ENCODE measurements at regions of chr12 and their contacts with region 1.

Region 1: GRCh38 chr12:56127888-56128669 is at the start of gene ESYT1:
- DNase-seq: peak; percentile 83
- ATAC-seq: peak; percentile 86
- H3K4me3 Mint-ChIP-seq: peak within 1 kb of the TSS; percentile 97
- H3K27ac Mint-ChIP-seq: peak within 1 kb of the TSS; percentile 98
- H3K4me1 Mint-ChIP-seq: peaks cover 69% of the 10 kb centered on the region
- H3K27me3 Mint-ChIP-seq: no peaks in the 10 kb centered on the region
- CTCF ChIP-seq: no peak
- total RNA-seq, gene ESYT1: 120 and 137 TPM in 2 replicates

Region 2: GRCh38 chr12:56146492-56147460 is 18.7 kb after region 1 on chr12:
- CTCF ChIA-PET with region 1: interaction called, 7 read pairs
- POLR2A ChIA-PET with region 1: interaction called, 80 read pairs
- intact Hi-C with region 1: no loop called
- DNase-seq: no peak
- ATAC-seq: no peak
- H3K4me3 Mint-ChIP-seq: no peak overlapping the region
- H3K27ac Mint-ChIP-seq: no peak overlapping the region
- H3K4me1 Mint-ChIP-seq: peaks cover 30% of the 10 kb centered on the region
- H3K27me3 Mint-ChIP-seq: no peaks in the 10 kb centered on the region
- CTCF ChIP-seq: no peak

Region 3: DNA sequence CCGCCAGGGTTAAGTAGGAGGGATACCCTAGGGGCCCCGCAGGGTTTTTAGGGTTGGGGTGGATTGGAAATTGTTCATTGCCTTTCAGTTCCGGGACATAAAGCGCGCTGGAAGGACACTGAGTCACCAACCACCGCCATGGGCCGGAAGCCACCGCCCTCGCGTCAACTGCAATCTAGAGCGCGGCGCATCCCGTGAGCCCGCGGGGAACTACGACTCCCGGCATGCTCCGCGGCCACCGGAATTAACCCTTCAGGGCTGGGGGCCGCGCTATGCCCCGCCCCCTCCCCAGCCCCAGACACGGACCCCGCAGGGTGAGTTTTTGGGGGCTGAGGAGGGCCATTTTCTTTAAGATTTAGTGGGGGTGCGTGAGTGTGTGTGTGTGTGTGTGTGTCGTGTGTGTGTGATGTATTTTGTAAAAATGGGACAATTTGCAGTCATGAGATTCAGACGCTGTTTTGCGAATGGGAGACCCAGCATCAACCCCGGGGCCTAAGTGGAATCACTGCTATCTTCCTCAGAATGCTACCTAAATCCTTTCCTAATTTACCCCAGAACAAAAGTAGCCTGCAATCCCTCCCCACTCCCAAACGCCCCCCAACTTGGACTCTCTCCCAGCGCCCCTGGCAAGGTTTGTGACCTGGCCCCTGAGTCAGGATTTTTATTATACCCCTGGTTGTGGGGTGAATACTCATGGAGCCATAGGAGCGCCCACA is 24.4 kb after region 1 on chr12 and contains the start of gene MYL6B:
- CTCF ChIA-PET with region 1: interaction called, 7 read pairs
- POLR2A ChIA-PET with region 1: interaction called, 80 read pairs
- intact Hi-C with region 1: loop called (anchors 1 kb)
- DNase-seq: peak; percentile 87
- ATAC-seq: peak; percentile 89
- H3K4me3 Mint-ChIP-seq: peak within 1 kb of the TSS; percentile 93
- H3K27ac Mint-ChIP-seq: peak within 1 kb of the TSS; percentile 99
- H3K4me1 Mint-ChIP-seq: peaks cover 40% of the 10 kb centered on the region
- H3K27me3 Mint-ChIP-seq: no peaks in the 10 kb centered on the region
- CTCF ChIP-seq: no peak
- total RNA-seq, gene MYL6B: 25.2 and 36.2 TPM in 2 replicates

Region 4: DNA sequence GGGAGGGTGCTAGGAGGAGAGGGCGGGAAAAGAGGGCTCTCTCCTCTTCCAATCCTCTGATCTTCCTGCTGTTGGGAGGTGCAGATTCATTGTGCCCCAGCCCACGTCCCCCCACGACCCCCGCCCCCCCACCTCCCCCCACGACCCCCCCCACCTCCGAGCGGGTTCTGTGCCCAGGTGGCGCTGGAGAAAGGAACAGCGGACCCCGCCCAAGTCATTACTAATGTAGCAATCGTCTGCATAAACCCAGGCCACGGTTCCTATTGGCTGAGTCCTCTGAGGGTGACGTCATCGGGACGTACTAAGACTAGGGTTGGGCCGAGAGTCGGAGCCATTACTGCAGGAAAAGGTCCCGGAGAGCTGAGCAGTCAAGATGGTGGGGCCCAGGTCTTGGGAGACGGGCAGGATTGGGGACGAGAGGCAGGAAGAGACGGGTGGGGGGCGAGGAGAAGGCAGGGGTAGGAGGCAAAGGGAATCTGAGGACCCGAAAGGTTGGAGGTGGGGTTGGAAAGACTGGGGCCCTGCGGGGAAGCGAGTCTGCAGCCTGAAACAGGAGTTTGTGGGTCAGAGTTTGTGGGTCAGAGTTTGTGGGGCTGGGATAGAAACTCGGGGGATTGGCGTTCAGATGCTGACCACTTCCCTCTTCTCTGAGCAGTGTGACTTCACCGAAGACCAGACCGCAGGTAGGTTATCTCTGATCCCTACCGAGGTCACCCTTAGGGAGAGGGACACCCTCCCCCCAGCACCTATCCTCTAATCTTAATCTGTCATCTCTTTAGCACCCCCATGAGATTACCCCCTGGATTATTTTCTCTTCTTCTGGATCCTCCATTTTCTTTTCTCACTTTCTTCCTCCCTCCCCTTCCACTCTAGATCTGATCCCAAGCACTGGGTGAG is 30.2 kb after region 1 on chr12 and contains the start of gene MYL6:
- CTCF ChIA-PET with region 1: interaction called, 6 read pairs
- POLR2A ChIA-PET with region 1: interaction called, 67 read pairs
- intact Hi-C with region 1: loop called (anchors 1 kb)
- DNase-seq: peak; percentile 70
- ATAC-seq: peak; percentile 86
- H3K4me3 Mint-ChIP-seq: peak within 1 kb of the TSS; percentile 94
- H3K27ac Mint-ChIP-seq: peak within 1 kb of the TSS; percentile 95
- H3K4me1 Mint-ChIP-seq: peaks cover 48% of the 10 kb centered on the region
- H3K27me3 Mint-ChIP-seq: no peaks in the 10 kb centered on the region
- CTCF ChIP-seq: no peak
- total RNA-seq, gene MYL6: 921 and 1,059 TPM in 2 replicates

Region 5: GRCh38 chr12:56346703-56347102 is 218.6 kb after region 1 on chr12:
- CTCF ChIA-PET with region 1: no interaction called
- POLR2A ChIA-PET with region 1: no interaction called
- intact Hi-C with region 1: no loop called
- DNase-seq: no peak
- ATAC-seq: no peak
- H3K4me3 Mint-ChIP-seq: no peak overlapping the region
- H3K27ac Mint-ChIP-seq: no peak overlapping the region
- H3K4me1 Mint-ChIP-seq: no peaks in the 10 kb centered on the region
- H3K27me3 Mint-ChIP-seq: no peaks in the 10 kb centered on the region
- CTCF ChIP-seq: no peak

Region 6: GRCh38 chr12:56593909-56594621 is 466.0 kb after region 1 on chr12:
- CTCF ChIA-PET with region 1: no interaction called
- POLR2A ChIA-PET with region 1: no interaction called
- intact Hi-C with region 1: loop called (anchors 10 kb)
- DNase-seq: peak; percentile 33
- ATAC-seq: peak; percentile 83
- H3K4me3 Mint-ChIP-seq: no peak overlapping the region
- H3K27ac Mint-ChIP-seq: no peak overlapping the region
- H3K4me1 Mint-ChIP-seq: peaks cover 2% of the 10 kb centered on the region
- H3K27me3 Mint-ChIP-seq: no peaks in the 10 kb centered on the region
- CTCF ChIP-seq: no peak

Region 7: DNA sequence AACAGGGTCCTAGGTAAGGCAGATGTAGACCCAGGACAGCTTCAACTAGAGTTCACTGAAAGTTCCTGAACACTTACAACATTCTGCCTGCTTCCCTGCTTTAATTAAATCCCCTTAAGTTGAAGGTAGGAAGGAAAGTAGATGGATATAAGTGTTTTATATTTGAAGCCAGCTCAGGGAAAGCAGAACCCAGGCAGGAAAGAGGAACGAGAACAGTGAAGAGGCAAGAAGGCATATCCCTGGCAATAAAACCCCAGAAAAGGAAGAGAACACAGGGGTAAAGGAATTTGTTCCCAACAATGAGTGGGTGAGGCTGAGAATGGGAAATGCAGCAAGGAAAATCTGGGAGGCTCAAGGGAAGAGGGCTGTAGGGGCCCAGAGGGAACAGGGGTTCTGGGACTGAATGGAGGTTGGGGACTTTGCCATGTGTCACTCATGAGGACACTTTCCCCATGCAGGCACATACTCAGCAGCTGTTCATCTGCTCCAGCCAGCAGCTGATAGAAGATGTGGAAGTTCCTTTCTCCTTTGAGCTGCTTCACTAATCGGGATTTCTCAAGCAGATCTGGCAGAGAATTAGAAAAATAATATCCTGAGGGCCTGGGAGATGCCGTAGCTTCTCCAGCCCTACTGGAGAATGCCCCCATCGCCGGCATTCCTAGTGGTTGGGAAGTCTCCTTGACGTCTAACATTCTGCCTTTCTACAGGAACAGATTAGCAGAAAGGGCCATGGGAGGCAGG is 918.2 kb after region 1 on chr12:
- CTCF ChIA-PET with region 1: no interaction called
- POLR2A ChIA-PET with region 1: no interaction called
- intact Hi-C with region 1: no loop called
- DNase-seq: no peak
- ATAC-seq: no peak
- H3K4me3 Mint-ChIP-seq: no peak overlapping the region
- H3K27ac Mint-ChIP-seq: no peak overlapping the region
- H3K4me1 Mint-ChIP-seq: peaks cover 22% of the 10 kb centered on the region
- H3K27me3 Mint-ChIP-seq: no peaks in the 10 kb centered on the region
- CTCF ChIP-seq: no peak

Measured in activated B cell treated with CpG ODN at 0.5 μM for 24 hours (primary cell).